ENCODE measurements at regions of chr3 and their contacts with region 1.

Region 1: DNA sequence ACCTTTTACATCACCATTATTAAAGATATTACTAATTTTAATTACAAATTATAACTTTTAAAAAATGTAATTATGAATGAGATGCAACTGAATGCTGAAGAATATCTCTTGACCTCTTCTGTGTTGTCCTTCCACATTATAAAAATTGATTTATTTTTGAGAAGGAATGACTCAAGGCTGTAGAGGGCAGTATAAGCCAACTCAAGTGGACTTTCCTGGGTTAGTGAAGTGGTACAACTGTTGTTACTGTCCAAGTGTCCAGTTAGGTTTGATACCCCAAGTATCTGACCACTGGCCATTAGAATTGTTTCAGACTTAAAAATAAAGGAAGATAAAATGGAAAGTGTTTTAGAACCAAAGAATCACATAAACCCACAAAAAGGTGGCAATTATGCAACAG is 51.9 kb downstream of the BBX start:
- DNase-seq: peak in 1 of 5 donors; percentile 20
- H3K4me3 ChIP-seq: no peak overlapping the region
- H3K4me3 Mint-ChIP-seq: no peak overlapping the region
- H3K27ac ChIP-seq: no peak overlapping the region
- H3K27ac Mint-ChIP-seq: peak overlapping the region in 1 of 7 donors; percentile 8
- H3K4me1 ChIP-seq: peaks cover 15% of the 10 kb centered on the region
- H3K4me1 Mint-ChIP-seq: peaks cover 29 to 47% (median 38%) of the 10 kb centered on the region in 4 donors
- H3K27me3 ChIP-seq: no peaks in the 10 kb centered on the region
- H3K27me3 Mint-ChIP-seq: no peaks in the 10 kb centered on the region

Region 2: DNA sequence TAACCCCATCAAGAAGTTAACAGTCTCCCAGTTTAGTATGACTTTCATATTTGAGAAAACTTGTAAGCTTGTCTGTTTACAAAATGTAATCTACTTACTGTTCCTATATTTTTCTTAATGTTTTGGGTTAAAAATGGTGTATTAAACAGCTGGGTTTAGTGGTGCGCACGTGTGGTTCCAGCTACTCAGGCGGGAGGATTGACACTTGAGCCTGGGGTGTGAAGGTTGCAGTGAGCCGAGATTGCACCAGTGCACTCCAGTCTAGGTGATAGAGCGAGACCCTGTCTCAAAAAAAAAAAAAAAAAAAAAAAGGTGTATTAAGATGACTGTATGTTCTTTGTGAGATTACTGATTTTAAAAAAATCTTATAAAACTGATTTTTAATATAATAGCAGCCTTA is 17.4 kb after region 1 on chr3:
- CTCF ChIA-PET with region 1: interaction called, 4 read pairs
- POLR2A ChIA-PET with region 1: no interaction called
- intact Hi-C with region 1: loop called (anchors 2 kb)
- DNase-seq: no peak
- H3K4me3 ChIP-seq: no peak overlapping the region
- H3K4me3 Mint-ChIP-seq: no peak overlapping the region
- H3K27ac ChIP-seq: no peak overlapping the region
- H3K27ac Mint-ChIP-seq: no peak overlapping the region
- H3K4me1 ChIP-seq: peaks cover 13% of the 10 kb centered on the region
- H3K4me1 Mint-ChIP-seq: peaks cover 24 to 58% (median 35%) of the 10 kb centered on the region in 4 donors
- H3K27me3 ChIP-seq: no peaks in the 10 kb centered on the region
- H3K27me3 Mint-ChIP-seq: no peaks in the 10 kb centered on the region